PC-3 (cell line): ENCODE measurements at regions of chr6 and their contacts with region 1.

Region 1: DNA sequence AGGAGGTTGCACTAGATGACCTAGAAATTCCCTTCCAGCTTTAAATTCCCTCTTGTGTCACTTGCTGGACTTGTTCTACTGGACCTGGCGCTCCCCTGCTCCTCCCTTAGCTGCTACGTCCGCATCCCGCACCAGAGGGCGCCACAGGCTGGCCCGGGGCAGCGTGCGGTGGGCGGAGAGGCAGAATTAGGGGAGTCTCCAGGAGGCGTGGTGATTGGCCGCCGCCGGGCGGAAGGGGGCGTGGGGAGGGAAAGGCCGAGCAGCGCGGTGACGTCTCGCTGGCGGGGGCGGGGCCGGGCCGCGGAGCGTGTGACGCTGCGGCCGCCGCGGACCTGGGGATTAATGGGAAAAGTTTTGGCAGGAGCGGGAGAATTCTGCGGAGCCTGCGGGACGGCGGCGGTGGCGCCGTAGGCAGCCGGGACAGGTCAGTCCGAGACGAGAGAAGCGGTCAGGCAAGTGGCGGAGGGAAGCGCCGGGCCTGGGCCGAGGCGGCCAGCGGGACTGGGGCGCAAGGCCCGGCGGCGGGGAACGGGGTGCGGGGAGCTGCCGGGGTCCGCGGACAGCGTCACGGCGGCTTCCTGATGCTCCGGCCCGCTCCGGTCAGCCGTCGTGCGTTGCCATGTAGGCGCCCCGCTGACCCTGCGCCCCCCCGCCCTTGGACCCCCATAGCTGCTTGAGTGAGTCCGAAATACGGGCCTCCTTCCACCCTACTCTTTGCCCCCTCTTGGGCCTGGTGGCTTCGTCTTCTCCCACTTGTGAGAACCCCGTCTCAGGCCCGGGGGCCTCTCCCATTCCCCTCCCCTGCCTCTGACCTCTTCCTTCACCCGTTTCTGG is at the start of gene PPARD:
- DNase-seq: peak; percentile 99
- ATAC-seq: peak; percentile 92
- H3K4me3 ChIP-seq: peak within 1 kb of the TSS; percentile 98
- H3K27ac ChIP-seq: peak within 1 kb of the TSS; percentile 51
- H3K4me1 ChIP-seq: peaks cover 34% of the 10 kb centered on the region
- H3K27me3 ChIP-seq: no peaks in the 10 kb centered on the region
- CTCF ChIP-seq: peak; percentile 97
- total RNA-seq, gene PPARD: 24.5 and 26.2 TPM in 2 replicates

Region 2: GRCh38 chr6:34922177-34922663 is 420.3 kb before region 1 on chr6:
- CTCF ChIA-PET with region 1: no interaction called
- POLR2A ChIA-PET with region 1: no interaction called
- intact Hi-C with region 1: no loop called
- DNase-seq: peak; percentile 74
- ATAC-seq: peak; percentile 87
- H3K4me3 ChIP-seq: no peak overlapping the region
- H3K27ac ChIP-seq: no peak overlapping the region
- H3K4me1 ChIP-seq: peaks cover 25% of the 10 kb centered on the region
- H3K27me3 ChIP-seq: no peaks in the 10 kb centered on the region
- CTCF ChIP-seq: no peak

Region 3: DNA sequence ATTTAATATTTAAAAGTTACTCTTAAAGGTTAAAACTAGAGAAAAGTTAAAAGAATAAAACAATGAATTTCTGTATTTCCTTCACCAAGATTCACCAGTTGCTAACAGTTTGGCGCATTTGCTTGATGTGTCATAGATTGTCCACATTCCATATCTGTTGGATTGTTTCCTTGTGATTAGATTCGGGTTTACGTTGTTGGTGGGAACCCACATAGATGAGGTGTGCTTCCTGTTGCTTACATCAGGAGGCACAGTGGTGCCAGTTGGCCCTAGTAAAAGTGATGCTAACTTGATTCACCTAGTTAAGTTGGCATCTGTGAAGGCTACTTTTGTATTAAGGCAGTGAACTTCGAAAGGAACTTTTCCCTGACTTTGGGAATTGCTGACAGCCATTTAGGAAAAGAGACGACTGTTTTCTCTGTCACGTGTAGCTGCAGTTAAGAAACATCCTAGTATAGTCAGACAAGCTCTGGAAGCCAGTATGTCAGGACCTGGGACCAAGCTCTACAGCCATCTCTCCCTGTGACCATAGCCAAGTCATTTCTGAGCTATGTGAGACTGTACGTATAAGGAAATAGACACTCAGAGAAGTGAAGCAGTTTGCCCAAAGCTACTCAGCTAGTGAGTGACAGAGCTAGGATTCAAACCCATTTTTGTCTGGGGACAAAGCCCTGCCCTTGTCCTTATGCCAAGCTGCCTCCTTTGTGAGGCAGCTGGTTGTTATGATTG is 48.9 kb after region 1 on chr6:
- CTCF ChIA-PET with region 1: interaction called, 3 read pairs
- POLR2A ChIA-PET with region 1: interaction called, 3 read pairs
- intact Hi-C with region 1: loop called (anchors 1 kb)
- DNase-seq: peak; percentile 99
- ATAC-seq: peak; percentile 75
- H3K4me3 ChIP-seq: peak overlapping the region; percentile 29; the same call in 1 of the 2 replicates
- H3K27ac ChIP-seq: peak overlapping the region; percentile 99
- H3K4me1 ChIP-seq: peaks cover 55% of the 10 kb centered on the region
- H3K27me3 ChIP-seq: no peaks in the 10 kb centered on the region
- CTCF ChIP-seq: peak; percentile 22; the same call in 1 of the 2 replicates

Region 4: GRCh38 chr6:35427851-35428321 is 85.4 kb after region 1 on chr6:
- CTCF ChIA-PET with region 1: no interaction called
- POLR2A ChIA-PET with region 1: interaction called, 10 read pairs
- intact Hi-C with region 1: no loop called
- DNase-seq: peak; percentile 95
- ATAC-seq: peak; percentile 82
- H3K4me3 ChIP-seq: peak overlapping the region; percentile 46
- H3K27ac ChIP-seq: peak overlapping the region; percentile 98
- H3K4me1 ChIP-seq: peaks cover 48% of the 10 kb centered on the region
- H3K27me3 ChIP-seq: no peaks in the 10 kb centered on the region
- CTCF ChIP-seq: no peak

Region 5: DNA sequence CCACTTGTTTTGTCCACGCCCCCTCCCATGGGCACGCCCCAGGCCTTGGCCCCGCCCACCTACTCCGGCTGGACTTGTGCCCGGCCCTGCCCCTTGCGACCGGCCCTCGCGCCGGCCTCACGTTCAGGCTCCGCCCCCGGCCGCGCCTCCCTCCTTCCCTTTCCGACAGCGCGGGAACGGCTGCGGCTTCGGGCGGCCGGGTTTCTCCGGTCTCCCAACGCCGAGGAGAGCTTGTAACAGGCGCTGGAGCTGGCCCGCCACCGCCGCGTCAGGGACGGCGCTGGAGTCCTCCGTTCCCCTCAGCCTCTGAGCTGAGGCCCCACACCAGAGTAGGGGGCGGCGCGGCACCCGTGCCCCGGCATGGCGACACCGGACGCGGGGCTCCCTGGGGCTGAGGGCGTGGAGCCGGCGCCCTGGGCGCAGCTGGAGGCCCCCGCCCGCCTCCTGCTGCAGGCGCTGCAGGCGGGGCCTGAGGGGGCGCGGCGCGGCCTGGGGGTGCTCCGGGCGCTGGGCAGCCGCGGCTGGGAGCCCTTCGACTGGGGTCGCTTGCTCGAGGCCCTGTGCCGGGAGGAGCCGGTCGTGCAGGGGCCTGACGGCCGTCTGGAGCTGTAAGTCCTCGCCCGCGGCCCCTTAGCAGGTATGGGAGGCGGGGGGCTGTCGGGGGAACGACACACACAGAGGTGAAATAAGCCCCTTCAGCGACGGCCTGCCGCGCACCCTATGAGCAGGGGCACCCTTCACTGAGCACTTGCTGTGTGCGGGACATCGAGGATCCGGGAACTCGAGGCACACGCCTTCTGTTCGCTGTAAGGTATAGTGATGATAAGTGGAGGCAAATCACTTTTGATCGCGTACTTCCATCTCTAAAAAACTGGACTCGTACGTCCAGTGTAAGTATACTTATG is 110.0 kb after region 1 on chr6 and contains the start of gene FANCE:
- CTCF ChIA-PET with region 1: interaction called, 29 read pairs
- POLR2A ChIA-PET with region 1: no interaction called
- intact Hi-C with region 1: loop called (anchors 1 kb)
- DNase-seq: peak; percentile 95
- ATAC-seq: peak; percentile 79
- H3K4me3 ChIP-seq: peak within 1 kb of the TSS; percentile 79
- H3K27ac ChIP-seq: no peak within 1 kb of the TSS
- H3K4me1 ChIP-seq: peaks cover 19% of the 10 kb centered on the region
- H3K27me3 ChIP-seq: no peaks in the 10 kb centered on the region
- CTCF ChIP-seq: no peak
- total RNA-seq, gene FANCE: 13.8 and 18.6 TPM in 2 replicates

Region 6: DNA sequence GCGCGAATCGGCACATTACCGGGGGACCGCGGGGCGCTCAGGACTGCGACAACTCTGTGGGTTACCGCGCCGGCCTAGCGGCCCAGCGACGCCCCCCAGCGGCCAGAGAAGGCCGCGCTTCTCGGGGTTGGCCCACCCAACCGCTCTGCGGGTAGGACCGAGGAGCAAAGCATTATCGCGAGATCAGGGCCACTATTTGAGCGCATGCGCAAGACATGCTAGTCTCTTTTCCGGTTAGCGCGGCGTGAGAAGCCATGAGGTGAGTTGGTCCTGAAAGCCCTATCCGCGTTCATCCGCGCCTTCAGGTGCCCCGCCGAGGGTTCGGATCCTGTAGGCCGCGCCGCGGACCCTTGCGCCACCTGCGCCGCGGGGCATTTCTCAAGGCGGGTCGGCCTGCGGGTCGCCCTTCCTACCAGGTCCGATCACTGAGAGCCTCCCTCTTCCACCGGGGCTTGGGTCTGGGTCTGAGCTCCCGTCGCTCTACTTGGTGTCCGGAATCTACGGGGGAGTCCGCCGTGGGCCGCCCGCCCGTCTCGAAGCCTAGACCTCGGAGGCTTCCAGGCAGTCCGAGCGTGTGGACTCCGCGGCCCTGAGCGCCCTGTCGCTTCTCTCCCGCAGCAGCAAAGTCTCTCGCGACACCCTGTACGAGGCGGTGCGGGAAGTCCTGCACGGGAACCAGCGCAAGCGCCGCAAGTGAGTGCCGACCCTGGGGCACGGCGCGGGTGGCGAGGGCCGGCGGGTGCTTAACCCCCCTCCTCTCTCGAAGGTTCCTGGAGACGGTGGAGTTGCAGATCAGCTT is 125.9 kb after region 1 on chr6 and contains the start of gene RPL10A:
- CTCF ChIA-PET with region 1: interaction called, 5 read pairs
- POLR2A ChIA-PET with region 1: interaction called, 6 read pairs
- intact Hi-C with region 1: loop called (anchors 1 kb)
- DNase-seq: peak; percentile 98
- ATAC-seq: peak; percentile 85
- H3K4me3 ChIP-seq: peak within 1 kb of the TSS; percentile 82
- H3K27ac ChIP-seq: peak within 1 kb of the TSS; percentile 81
- H3K4me1 ChIP-seq: peaks cover 27% of the 10 kb centered on the region
- H3K27me3 ChIP-seq: no peaks in the 10 kb centered on the region
- CTCF ChIP-seq: peak; percentile 96
- total RNA-seq, gene RPL10A: 1,114 and 1,509 TPM in 2 replicates